ENCODE measurements at regions of chr3 and their contacts with region 1.

Region 1: GRCh38 chr3:45938864-45939263 is 4.4 kb upstream of the CXCR6 start:
- DNase-seq: peak; percentile 78 to 80
- H3K4me3 ChIP-seq: no peak overlapping the region
- H3K27ac ChIP-seq: no peak overlapping the region
- H3K4me1 ChIP-seq: no peaks in the 10 kb centered on the region
- H3K27me3 ChIP-seq: no peaks in the 10 kb centered on the region
- CTCF ChIP-seq: peak; percentile 74 to 90 (median 87)
- POLR2A ChIP-seq: no peak

Region 2: GRCh38 chr3:45958321-45958791 is 19.5 kb after region 1 on chr3:
- intact Hi-C with region 1: no loop called
- DNase-seq: no peak
- H3K4me3 ChIP-seq: peak overlapping the region in 1 of 3 donors; percentile 6
- H3K27ac ChIP-seq: no peak overlapping the region
- H3K4me1 ChIP-seq: no peaks in the 10 kb centered on the region
- H3K27me3 ChIP-seq: no peaks in the 10 kb centered on the region
- CTCF ChIP-seq: no peak
- POLR2A ChIP-seq: no peak

Region 3: GRCh38 chr3:46078712-46079400 is 140.0 kb after region 1 on chr3:
- intact Hi-C with region 1: loop called (anchors 5 kb)
- DNase-seq: peak; percentile 81 to 87
- H3K4me3 ChIP-seq: peak overlapping the region in 1 of 3 donors; percentile 7
- H3K27ac ChIP-seq: no peak overlapping the region
- H3K4me1 ChIP-seq: peaks cover 0 to 3% of the 10 kb centered on the region in 2 donors
- H3K27me3 ChIP-seq: no peaks in the 10 kb centered on the region
- CTCF ChIP-seq: peak; percentile 89 to 99 (median 98)
- POLR2A ChIP-seq: no peak

Region 4: DNA sequence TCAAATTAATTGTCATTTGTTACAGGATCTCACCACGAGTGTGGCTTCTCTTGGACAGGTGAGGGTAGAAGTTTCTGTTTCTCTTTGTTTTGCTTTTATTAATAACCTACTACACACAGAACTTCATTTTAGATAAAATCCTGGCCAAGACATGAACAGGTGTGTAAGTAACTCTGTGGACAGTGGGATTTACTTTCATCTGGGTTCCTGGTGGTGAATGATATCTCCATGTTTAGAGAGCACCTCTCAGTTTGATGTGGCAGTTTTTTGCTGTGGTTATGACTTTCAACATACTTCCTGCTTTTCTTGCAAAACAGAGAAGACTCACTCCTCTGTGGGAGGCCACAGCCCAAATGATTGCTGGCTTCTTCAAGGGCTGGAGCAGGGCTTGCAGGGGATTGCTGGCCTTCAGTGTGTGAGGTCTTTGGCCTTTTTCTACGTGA is 159.5 kb after region 1 on chr3:
- intact Hi-C with region 1: no loop called
- DNase-seq: no peak
- H3K4me3 ChIP-seq: no peak overlapping the region
- H3K27ac ChIP-seq: peak overlapping the region; percentile 67 to 94
- H3K4me1 ChIP-seq: no peaks in the 10 kb centered on the region
- H3K27me3 ChIP-seq: no peaks in the 10 kb centered on the region
- CTCF ChIP-seq: no peak
- POLR2A ChIP-seq: no peak

Region 5: DNA sequence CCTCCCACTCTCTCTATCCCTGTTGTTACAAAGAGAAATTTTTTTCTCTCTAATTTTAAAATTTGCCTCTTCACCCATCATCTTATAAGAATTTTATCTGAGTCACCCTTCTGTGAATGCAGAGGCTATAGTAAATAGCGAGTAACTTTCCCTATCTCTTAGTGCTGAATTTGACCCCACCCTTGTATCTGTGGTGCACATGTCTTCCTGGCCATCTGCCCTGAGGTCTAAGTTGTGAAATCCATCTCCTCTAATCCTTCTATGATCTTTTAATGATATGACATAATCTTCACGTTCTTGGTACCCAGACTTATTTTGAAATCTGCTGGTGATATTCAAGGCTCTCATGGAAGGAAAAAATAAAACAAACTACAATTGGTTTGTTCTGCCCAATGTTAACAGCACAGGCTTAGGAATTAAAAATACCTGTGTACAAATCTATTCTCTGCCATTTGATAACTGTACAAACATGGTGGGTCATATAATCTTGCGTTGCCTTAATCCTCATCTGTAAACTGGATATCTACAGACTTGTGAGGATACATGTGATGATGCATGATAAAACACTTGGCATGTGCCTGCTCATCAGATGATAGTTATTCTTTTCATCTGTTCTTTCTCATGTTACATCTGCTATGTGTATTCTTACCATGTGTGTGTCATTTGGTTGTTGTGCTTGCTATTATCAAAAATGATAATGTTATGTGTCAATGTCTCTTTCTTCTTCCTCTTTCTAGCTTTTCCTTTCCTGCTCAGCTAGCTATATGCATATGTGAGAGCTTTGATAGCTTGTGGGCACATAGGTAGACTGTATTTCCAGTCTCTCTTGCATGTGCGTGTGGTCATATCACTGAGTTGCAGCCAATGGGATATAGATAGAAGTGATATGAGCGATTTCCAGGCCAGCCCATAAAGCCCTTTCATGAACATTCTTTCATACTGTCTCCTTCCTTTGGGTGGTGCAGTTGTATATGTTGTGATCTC is 289.7 kb after region 1 on chr3:
- intact Hi-C with region 1: no loop called
- DNase-seq: no peak
- H3K4me3 ChIP-seq: no peak overlapping the region
- H3K27ac ChIP-seq: no peak overlapping the region
- H3K4me1 ChIP-seq: no peaks in the 10 kb centered on the region
- H3K27me3 ChIP-seq: peaks cover 0 to under 1% of the 10 kb centered on the region in 2 donors
- CTCF ChIP-seq: no peak
- POLR2A ChIP-seq: no peak

Measured in breast epithelium (tissue), 4 donors.